Heart right ventricle (tissue), 16 donors: ENCODE measurements at regions of chr10 and their contacts with region 1.

Region 1: GRCh38 chr10:88538038-88538437 is 45.1 kb downstream of the RNLS start:
- DNase-seq: no peak
- ATAC-seq: peak in 3 of 8 donors; percentile 36 to 62 (median 57)
- H3K4me3 ChIP-seq: no peak overlapping the region
- H3K27ac ChIP-seq: peak overlapping the region in 7 of 10 donors; percentile 0 to 51 (median 8)
- H3K4me1 ChIP-seq: peaks cover 0 to 13% (median 5%) of the 10 kb centered on the region in 9 donors
- H3K27me3 ChIP-seq: no peaks in the 10 kb centered on the region
- CTCF ChIP-seq: no peak

Region 2: GRCh38 chr10:88401671-88402347 is 136.2 kb before region 1 on chr10:
- intact Hi-C with region 1: loop called in 1 of 10 experiments (anchors 10 kb)
- DNase-seq: no peak
- ATAC-seq: no peak
- H3K4me3 ChIP-seq: no peak overlapping the region
- H3K27ac ChIP-seq: no peak overlapping the region
- H3K4me1 ChIP-seq: peaks cover 0 to 7% (median 0%) of the 10 kb centered on the region in 9 donors
- H3K27me3 ChIP-seq: no peaks in the 10 kb centered on the region
- CTCF ChIP-seq: peak in 5 of 9 donors; percentile 28 to 41 (median 35)

Region 3: DNA sequence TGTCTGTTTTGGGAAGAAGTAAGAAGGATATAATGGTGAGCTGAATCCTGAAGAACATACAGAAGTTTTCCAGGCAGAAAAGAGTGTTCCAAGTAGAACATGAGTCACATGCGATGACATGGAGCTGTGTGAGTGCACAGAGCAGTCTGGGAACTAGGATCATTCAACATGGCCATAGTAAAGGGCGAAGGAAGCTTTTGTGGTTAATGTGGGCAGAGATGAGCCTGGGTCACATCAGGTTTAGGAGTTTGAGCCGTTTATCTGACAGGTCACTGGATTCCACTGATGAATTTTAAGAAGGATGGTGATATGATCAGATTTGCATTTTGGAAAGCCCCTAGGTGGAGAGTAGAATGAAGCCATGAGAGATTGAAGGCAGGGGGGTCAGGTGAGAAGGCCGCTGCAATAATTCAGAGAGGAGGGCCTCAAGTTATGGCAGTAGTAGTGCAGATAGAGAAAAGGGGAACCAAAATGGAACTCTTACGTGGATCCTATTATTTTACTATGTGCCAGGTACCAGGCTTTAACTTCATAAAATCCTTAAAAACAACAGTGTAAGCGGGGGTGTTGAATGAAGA is 126.2 kb before region 1 on chr10:
- intact Hi-C with region 1: loop called in 2 of 10 experiments (anchors 10 kb)
- DNase-seq: no peak
- ATAC-seq: no peak
- H3K4me3 ChIP-seq: no peak overlapping the region
- H3K27ac ChIP-seq: no peak overlapping the region
- H3K4me1 ChIP-seq: peaks cover 0 to 10% (median under 1%) of the 10 kb centered on the region in 9 donors
- H3K27me3 ChIP-seq: no peaks in the 10 kb centered on the region
- CTCF ChIP-seq: no peak

Region 4: GRCh38 chr10:88515235-88515634 is 22.8 kb before region 1 on chr10:
- intact Hi-C with region 1: loop called in 1 of 10 experiments (anchors 1 kb)
- DNase-seq: no peak
- ATAC-seq: no peak
- H3K4me3 ChIP-seq: no peak overlapping the region
- H3K27ac ChIP-seq: no peak overlapping the region
- H3K4me1 ChIP-seq: no peaks in the 10 kb centered on the region
- H3K27me3 ChIP-seq: no peaks in the 10 kb centered on the region
- CTCF ChIP-seq: no peak

Region 5: DNA sequence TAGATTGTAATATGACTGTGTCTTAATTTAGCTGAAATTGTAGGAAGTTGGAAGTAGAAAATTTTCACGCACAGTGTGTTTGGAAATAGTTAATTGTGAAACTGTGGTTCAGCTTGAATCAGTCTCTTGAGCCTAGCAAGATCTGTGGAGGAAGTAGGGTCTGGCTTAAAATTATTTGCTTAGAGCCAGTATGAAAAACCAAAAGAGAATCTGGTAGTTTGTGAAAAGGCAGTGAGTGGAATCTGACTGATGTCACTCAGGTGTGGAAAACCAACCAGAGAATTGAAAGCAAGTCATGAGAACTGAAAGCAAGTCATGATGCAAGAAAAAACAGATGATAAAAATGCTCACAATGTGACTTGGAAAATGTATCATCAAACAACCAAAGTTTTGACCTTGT is 60.0 kb after region 1 on chr10:
- intact Hi-C with region 1: no loop called
- DNase-seq: no peak
- ATAC-seq: no peak
- H3K4me3 ChIP-seq: no peak overlapping the region
- H3K27ac ChIP-seq: no peak overlapping the region
- H3K4me1 ChIP-seq: no peaks in the 10 kb centered on the region
- H3K27me3 ChIP-seq: no peaks in the 10 kb centered on the region
- CTCF ChIP-seq: no peak